ENCODE measurements at regions of chr21 and their contacts with region 1.

Region 1: GRCh38 chr21:41425954-41426675 is at the start of gene MX1:
- DNase-seq: peak; percentile 86 to 90 (median 88)
- H3K4me3 ChIP-seq: peak within 1 kb of the TSS; percentile 79 to 91
- H3K4me3 Mint-ChIP-seq: peak within 1 kb of the TSS; percentile 95 to 99 (median 98)
- H3K27ac ChIP-seq: peak within 1 kb of the TSS; percentile 88
- H3K27ac Mint-ChIP-seq: peak within 1 kb of the TSS; percentile 93 to 98 (median 96)
- H3K4me1 ChIP-seq: peaks cover 22% of the 10 kb centered on the region
- H3K4me1 Mint-ChIP-seq: peaks cover 27 to 69% (median 47%) of the 10 kb centered on the region in 4 donors
- H3K27me3 ChIP-seq: no peaks in the 10 kb centered on the region
- H3K27me3 Mint-ChIP-seq: no peaks in the 10 kb centered on the region
- total RNA-seq, gene MX1: 73.7 to 75.3 TPM

Region 2: DNA sequence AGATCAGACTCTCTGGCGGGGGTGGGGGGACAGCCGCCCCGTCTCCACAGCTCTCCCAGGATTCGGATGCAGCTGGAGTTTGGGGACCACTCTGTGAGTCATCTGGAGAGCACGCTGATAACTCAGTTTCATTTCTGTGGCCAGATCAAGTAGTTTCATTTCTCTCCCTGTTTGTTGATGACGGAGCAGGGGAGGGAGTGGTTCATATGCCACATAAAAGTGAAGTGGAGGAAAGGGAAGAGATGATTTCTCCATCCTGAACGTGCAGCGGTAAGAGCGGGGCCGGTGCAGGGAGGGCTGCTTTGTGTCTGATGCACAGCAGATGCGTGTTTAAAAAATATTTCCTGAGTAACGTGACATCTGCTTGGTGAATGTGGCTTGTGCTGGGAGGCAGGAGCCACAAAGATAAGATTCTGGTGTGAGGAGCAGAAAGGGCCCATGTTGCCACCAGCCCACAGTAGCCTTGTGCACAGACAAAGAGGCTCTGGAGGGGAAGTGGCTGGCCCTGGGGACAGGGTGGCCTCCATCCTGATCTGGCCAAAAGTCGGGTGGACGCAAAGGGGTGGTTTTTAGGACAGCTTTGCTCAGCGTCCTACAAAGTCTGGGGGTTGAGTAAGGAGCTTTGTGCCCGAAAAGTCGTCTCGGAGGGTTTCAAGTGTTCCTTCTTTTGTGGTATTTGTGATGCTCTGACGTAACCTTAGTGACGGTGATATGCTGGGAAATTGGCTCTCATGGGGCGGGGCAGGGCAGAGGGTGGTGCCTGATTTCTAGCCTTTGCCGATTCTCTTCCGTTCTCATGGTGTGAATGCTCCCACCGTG is 64.1 kb before region 1 on chr21 and contains the start of gene MX2:
- CTCF ChIA-PET with region 1: interaction called, 3 read pairs
- POLR2A ChIA-PET with region 1: interaction called, 58 read pairs
- intact Hi-C with region 1: loop called (anchors 1 kb)
- DNase-seq: peak; percentile 91 to 94 (median 94)
- H3K4me3 ChIP-seq: peak within 1 kb of the TSS; percentile 27 to 91
- H3K4me3 Mint-ChIP-seq: peak within 1 kb of the TSS; percentile 89 to 97 (median 94)
- H3K27ac ChIP-seq: peak within 1 kb of the TSS; percentile 93
- H3K27ac Mint-ChIP-seq: peak within 1 kb of the TSS; percentile 99 to 100 (median 100)
- H3K4me1 ChIP-seq: peaks cover 40% of the 10 kb centered on the region
- H3K4me1 Mint-ChIP-seq: peaks cover 37 to 61% (median 55%) of the 10 kb centered on the region in 4 donors
- H3K27me3 ChIP-seq: no peaks in the 10 kb centered on the region
- H3K27me3 Mint-ChIP-seq: no peaks in the 10 kb centered on the region
- total RNA-seq, gene MX2: 98.7 to 107 TPM

Region 3: GRCh38 chr21:41369105-41369919 is 56.8 kb before region 1 on chr21:
- CTCF ChIA-PET with region 1: interaction called, 8 read pairs
- POLR2A ChIA-PET with region 1: interaction called, 56 read pairs
- intact Hi-C with region 1: no loop called
- DNase-seq: peak in 4 of 5 donors; percentile 22 to 65 (median 34)
- H3K4me3 ChIP-seq: peak overlapping the region; percentile 57 to 80
- H3K4me3 Mint-ChIP-seq: peak overlapping the region; percentile 87 to 97 (median 90)
- H3K27ac ChIP-seq: peak overlapping the region; percentile 69
- H3K27ac Mint-ChIP-seq: peak overlapping the region; percentile 90 to 96 (median 94)
- H3K4me1 ChIP-seq: peaks cover 68% of the 10 kb centered on the region
- H3K4me1 Mint-ChIP-seq: peaks cover 47 to 90% (median 70%) of the 10 kb centered on the region in 4 donors
- H3K27me3 ChIP-seq: no peaks in the 10 kb centered on the region
- H3K27me3 Mint-ChIP-seq: no peaks in the 10 kb centered on the region

Region 4: GRCh38 chr21:41411449-41412089 is 14.5 kb before region 1 on chr21:
- CTCF ChIA-PET with region 1: interaction called, 6 read pairs
- POLR2A ChIA-PET with region 1: interaction called, 19 read pairs
- intact Hi-C with region 1: no loop called
- DNase-seq: peak in 1 of 5 donors; percentile 12
- H3K4me3 ChIP-seq: no peak overlapping the region
- H3K4me3 Mint-ChIP-seq: no peak overlapping the region
- H3K27ac ChIP-seq: no peak overlapping the region
- H3K27ac Mint-ChIP-seq: peak overlapping the region in 3 of 7 donors; percentile 19 to 35 (median 29)
- H3K4me1 ChIP-seq: no peaks in the 10 kb centered on the region
- H3K4me1 Mint-ChIP-seq: peaks cover 0 to 7% (median 0%) of the 10 kb centered on the region in 4 donors
- H3K27me3 ChIP-seq: no peaks in the 10 kb centered on the region
- H3K27me3 Mint-ChIP-seq: no peaks in the 10 kb centered on the region